OCI-LY7 (cell line): ENCODE measurements at regions of chrX and their contacts with region 1.

Region 1: GRCh38 chrX:12894074-12895030 is 12.1 kb upstream of the TLR8 start:
- DNase-seq: peak; percentile 75
- H3K4me3 ChIP-seq: no peak overlapping the region
- H3K27ac ChIP-seq: peak overlapping the region; percentile 88
- H3K4me1 ChIP-seq: peaks cover 56% of the 10 kb centered on the region
- CTCF ChIP-seq: peak; percentile 88

Region 2: DNA sequence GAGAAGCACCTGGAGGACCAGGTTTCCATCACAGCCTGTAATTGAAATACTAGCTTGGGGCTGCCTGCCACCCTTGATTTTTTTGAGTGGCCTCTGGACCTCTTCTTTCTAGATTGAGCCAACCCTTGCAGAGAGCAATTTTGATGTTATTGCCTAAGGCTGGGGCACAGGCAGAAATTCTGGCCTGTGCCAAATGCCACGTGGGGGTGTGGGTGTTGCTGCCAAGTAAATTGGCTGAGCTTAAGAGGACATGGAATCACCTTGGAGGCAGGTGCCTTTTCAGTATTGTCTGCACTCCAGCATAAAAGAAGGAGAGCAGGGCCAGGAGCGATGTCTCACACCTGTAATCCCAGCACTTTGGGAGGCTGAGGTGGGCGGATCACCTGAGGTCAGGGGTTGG is 389.2 kb before region 1 on chrX:
- CTCF ChIA-PET with region 1: no interaction called
- POLR2A ChIA-PET with region 1: no interaction called
- intact Hi-C with region 1: loop called (anchors 10 kb)
- DNase-seq: no peak
- H3K4me3 ChIP-seq: no peak overlapping the region
- H3K27ac ChIP-seq: no peak overlapping the region
- H3K4me1 ChIP-seq: peaks cover 2% of the 10 kb centered on the region
- CTCF ChIP-seq: no peak

Region 3: DNA sequence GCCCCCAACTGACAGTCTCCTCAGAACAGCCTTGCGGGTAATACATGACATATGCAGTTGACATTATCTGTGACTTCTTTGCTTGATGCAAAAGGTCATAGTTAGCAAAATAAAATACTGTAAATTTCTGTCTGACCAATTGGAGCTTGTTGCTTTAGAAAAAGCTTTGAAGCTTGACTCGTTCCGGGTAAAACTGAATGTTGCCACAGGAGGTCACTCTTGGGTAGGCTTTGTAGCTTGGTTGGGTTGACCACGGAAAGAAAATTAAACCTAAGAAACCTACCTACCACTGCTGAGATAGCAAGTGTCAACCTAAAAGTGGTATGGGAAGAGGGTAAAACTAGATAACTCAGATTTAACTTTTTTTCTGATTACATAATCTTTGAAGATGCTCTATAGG is 79.9 kb before region 1 on chrX:
- CTCF ChIA-PET with region 1: interaction called, 5 read pairs
- POLR2A ChIA-PET with region 1: interaction called, 7 read pairs
- intact Hi-C with region 1: loop called (anchors 1 kb)
- DNase-seq: peak; percentile 69
- H3K4me3 ChIP-seq: no peak overlapping the region
- H3K27ac ChIP-seq: no peak overlapping the region
- H3K4me1 ChIP-seq: peaks cover 7% of the 10 kb centered on the region
- CTCF ChIP-seq: peak; percentile 79

Region 4: GRCh38 chrX:12843668-12844279 is 50.6 kb before region 1 on chrX:
- CTCF ChIA-PET with region 1: no interaction called
- POLR2A ChIA-PET with region 1: interaction called, 3 read pairs
- intact Hi-C with region 1: loop called (anchors 1 kb)
- DNase-seq: peak; percentile 44
- H3K4me3 ChIP-seq: peak overlapping the region; percentile 48
- H3K27ac ChIP-seq: peak overlapping the region; percentile 43
- H3K4me1 ChIP-seq: peaks cover 23% of the 10 kb centered on the region
- CTCF ChIP-seq: no peak

Region 5: GRCh38 chrX:12868747-12869146 is 25.6 kb before region 1 on chrX:
- CTCF ChIA-PET with region 1: interaction called, 3 read pairs
- POLR2A ChIA-PET with region 1: interaction called, 12 read pairs
- intact Hi-C with region 1: loop called (anchors 1 kb)
- DNase-seq: peak; percentile 38
- H3K4me3 ChIP-seq: peak overlapping the region; percentile 67
- H3K27ac ChIP-seq: peak overlapping the region; percentile 90
- H3K4me1 ChIP-seq: peaks cover 77% of the 10 kb centered on the region
- CTCF ChIP-seq: no peak